ENCODE measurements at regions of chr11 and their contacts with region 1.

Region 1: GRCh38 chr11:10792398-10792975 is 16.2 kb downstream of the EIF4G2 start:
- DNase-seq: peak; percentile 90 to 91
- H3K4me3 ChIP-seq: no peak overlapping the region
- H3K27ac ChIP-seq: no peak overlapping the region
- H3K4me1 ChIP-seq: peaks cover 2 to 6% of the 10 kb centered on the region in 2 donors
- H3K27me3 ChIP-seq: no peaks in the 10 kb centered on the region
- CTCF ChIP-seq: peak; percentile 70 to 97 (median 92)
- POLR2A ChIP-seq: no peak

Region 2: GRCh38 chr11:10285148-10285802 is 507.2 kb before region 1 on chr11:
- intact Hi-C with region 1: no loop called
- DNase-seq: no peak
- H3K4me3 ChIP-seq: no peak overlapping the region
- H3K27ac ChIP-seq: no peak overlapping the region
- H3K4me1 ChIP-seq: peaks cover 3 to 10% of the 10 kb centered on the region in 2 donors
- H3K27me3 ChIP-seq: no peaks in the 10 kb centered on the region
- CTCF ChIP-seq: no peak
- POLR2A ChIP-seq: no peak

Region 3: DNA sequence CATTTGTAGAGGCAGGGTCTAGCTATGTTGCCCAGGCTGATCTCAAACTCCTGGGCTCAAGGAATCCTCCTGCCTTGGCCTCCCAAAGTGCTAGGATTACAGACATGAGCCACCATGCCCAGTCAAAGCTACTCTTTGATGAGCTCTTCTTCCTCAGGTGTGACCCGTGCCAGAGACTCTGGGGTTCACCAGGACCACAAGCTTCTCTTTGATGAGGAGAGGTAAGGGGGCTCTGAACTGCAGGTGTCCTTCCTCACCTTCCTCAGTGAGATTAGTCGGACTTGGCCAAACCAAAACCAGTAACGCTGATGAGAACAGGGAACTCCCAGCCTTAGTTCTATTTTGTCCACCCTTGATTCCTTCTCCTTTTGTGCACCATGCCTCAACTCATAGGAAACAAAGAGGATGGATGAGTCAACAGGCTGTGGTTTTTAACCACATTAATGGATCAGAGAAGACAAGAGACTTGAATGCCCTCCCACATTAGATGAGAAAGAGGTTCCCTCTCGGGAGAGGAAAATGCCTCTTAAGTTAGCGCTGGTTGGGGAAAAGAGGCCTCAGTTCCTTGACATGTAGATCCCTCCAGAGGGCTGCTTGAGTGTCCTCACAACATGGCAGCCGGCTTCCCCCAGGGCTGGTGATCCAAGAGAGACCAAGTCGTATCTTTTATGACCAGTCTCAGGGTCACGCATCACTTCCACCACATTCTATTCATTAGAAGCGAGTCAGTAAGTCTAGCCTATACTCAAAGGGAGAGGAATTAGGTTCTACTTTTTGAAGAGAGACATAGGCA is 67.2 kb before region 1 on chr11:
- intact Hi-C with region 1: no loop called
- DNase-seq: no peak
- H3K4me3 ChIP-seq: no peak overlapping the region
- H3K27ac ChIP-seq: no peak overlapping the region
- H3K4me1 ChIP-seq: no peaks in the 10 kb centered on the region
- H3K27me3 ChIP-seq: no peaks in the 10 kb centered on the region
- CTCF ChIP-seq: no peak
- POLR2A ChIP-seq: no peak

Region 4: GRCh38 chr11:10933455-10934292 is 141.2 kb after region 1 on chr11:
- intact Hi-C with region 1: loop called (anchors 10 kb)
- DNase-seq: peak; percentile 93 to 95
- H3K4me3 ChIP-seq: peak overlapping the region in 2 of 3 donors; percentile 9 to 23
- H3K27ac ChIP-seq: peak overlapping the region; percentile 78 to 82 (median 80)
- H3K4me1 ChIP-seq: peaks cover 22 to 32% of the 10 kb centered on the region in 2 donors
- H3K27me3 ChIP-seq: no peaks in the 10 kb centered on the region
- CTCF ChIP-seq: peak; percentile 89 to 99 (median 98)
- POLR2A ChIP-seq: peak in 1 of 2 donors; percentile 56

Region 5: DNA sequence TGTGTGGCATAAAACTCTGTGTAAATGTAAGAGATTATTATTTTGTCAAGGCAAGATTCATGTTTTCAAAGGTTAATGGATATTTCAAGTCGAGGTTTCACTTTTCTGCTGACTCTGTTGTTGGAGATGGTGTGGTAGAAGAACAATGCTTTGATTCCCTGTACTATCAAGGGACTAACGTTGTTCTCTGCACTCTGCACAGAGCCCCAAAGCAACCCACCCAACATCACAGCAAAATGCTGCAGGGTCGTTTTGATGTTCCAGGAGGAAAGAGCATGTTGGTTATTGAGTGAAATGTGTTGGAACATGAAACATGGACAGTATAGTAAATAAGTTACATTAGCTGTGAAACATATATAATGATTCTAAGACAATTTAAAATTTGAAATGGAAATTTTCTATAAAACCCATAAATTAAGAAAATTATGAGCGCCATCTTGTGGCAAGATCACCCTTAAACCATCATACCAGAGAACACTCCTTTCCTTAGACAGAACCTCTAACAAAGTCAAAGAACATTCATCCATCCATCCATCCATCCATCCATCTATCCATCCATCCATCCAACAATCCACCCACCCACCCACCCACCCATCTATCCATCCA is 229.7 kb after region 1 on chr11:
- intact Hi-C with region 1: loop called (anchors 5 kb)
- DNase-seq: no peak
- H3K4me3 ChIP-seq: no peak overlapping the region
- H3K27ac ChIP-seq: no peak overlapping the region
- H3K4me1 ChIP-seq: no peaks in the 10 kb centered on the region
- H3K27me3 ChIP-seq: no peaks in the 10 kb centered on the region
- CTCF ChIP-seq: peak in 5 of 6 experiments; percentile 18 to 57 (median 51)
- POLR2A ChIP-seq: no peak

Measured in thyroid gland (tissue), 4 donors.